Adrenal gland (tissue), 19 donors: ENCODE measurements at regions of chr1 and their contacts with region 1.

Region 1: GRCh38 chr1:201895913-201896807 is 7.5 kb downstream of the SHISA4 start:
- DNase-seq: peak; percentile 91 to 97 (median 93)
- H3K4me3 ChIP-seq: no peak overlapping the region
- H3K27ac ChIP-seq: peak overlapping the region in 3 of 5 donors; percentile 31 to 82 (median 46)
- H3K4me1 ChIP-seq: peaks cover 0 to 9% of the 10 kb centered on the region in 2 donors
- H3K27me3 ChIP-seq: no peaks in the 10 kb centered on the region
- CTCF ChIP-seq: peak; percentile 92 to 98 (median 97)
- POLR2A ChIP-seq: no peak

Region 2: DNA sequence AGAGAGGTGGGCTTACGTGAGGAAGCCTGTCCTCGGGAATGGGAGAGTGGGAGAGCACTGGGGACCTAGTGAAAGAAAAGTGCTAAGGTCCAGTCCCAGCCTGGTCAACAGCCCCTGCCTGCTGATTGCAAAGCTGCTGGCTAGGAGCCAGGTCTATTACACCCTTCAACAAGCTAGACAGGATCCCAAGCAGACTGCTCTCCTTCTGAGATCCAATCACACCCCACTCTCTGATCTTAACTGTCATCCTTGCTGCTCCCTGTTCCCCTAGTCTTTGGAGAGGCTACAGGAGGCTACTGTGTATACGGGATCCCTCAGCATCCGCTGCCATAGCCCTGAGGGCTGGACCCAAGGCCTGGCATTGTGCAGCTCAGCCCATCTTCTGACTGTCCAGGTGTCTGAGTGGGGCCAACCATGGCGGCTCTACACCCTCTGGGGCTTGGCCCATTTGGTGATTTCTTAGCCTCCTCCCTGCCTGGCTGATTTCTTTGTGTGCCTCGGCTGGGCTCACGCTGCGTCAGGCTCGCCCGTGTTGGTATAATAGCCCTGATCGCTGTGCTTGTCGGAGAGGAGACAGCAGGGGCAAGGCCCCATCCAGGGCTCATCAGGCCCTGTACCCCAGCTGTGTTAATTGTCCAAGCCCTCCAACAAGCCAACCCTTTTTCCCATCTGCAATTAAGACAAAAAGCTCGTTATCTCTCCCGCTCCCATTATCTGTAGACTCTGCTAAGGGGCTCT is 313.3 kb before region 1 on chr1:
- intact Hi-C with region 1: no loop called
- DNase-seq: peak in 1 of 7 donors; percentile 31
- H3K4me3 ChIP-seq: no peak overlapping the region
- H3K27ac ChIP-seq: no peak overlapping the region
- H3K4me1 ChIP-seq: peaks cover 0 to 4% of the 10 kb centered on the region in 2 donors
- H3K27me3 ChIP-seq: no peaks in the 10 kb centered on the region
- CTCF ChIP-seq: no peak
- POLR2A ChIP-seq: no peak

Region 3: GRCh38 chr1:201970334-201971159 is 74.4 kb after region 1 on chr1:
- intact Hi-C with region 1: loop called (anchors 2 kb)
- DNase-seq: peak in 2 of 7 donors; percentile 36 to 45
- H3K4me3 ChIP-seq: no peak overlapping the region
- H3K27ac ChIP-seq: no peak overlapping the region
- H3K4me1 ChIP-seq: peaks cover 11 to 14% of the 10 kb centered on the region in 2 donors
- H3K27me3 ChIP-seq: no peaks in the 10 kb centered on the region
- CTCF ChIP-seq: no peak
- POLR2A ChIP-seq: no peak

Region 4: GRCh38 chr1:202046227-202046801 is 150.2 kb after region 1 on chr1:
- intact Hi-C with region 1: no loop called
- DNase-seq: no peak
- H3K4me3 ChIP-seq: no peak overlapping the region
- H3K27ac ChIP-seq: no peak overlapping the region
- H3K4me1 ChIP-seq: no peaks in the 10 kb centered on the region
- H3K27me3 ChIP-seq: no peaks in the 10 kb centered on the region
- CTCF ChIP-seq: no peak
- POLR2A ChIP-seq: no peak

Region 5: DNA sequence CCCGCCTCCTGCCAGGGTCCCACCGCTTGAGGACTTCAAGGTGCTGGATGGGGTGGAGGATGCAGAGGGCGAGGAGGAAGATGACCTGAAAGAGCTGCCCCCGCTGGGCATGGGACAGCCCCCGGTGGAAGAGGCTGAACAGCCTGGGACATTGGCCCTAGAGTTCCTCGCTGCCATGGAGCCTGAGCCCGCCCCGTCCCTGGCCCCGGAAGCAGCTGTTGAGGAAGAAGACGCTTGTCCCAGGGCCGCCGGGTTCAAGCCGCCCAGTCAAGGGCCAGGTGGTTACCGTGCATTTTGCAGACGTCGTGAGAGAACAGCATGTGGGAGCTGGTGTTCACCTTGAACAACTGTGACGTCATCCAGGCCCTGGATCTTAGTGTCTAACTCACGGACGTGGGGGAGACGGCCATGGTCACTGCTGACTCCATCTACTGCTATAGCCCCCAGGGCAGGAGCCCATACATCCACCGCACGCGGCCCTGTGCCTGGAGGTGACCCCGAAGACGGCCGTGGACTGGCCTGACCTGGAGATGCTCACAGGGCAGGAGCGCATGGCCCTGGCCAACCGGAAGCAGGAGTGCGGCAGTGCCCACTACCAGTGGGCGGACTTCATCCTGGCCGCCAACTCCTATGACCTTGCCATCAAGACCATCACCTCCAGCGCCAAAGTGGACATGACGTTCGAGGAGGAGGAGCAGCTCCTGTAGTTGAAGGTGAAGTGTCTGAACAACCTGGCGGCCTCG is 542.4 kb after region 1 on chr1:
- intact Hi-C with region 1: no loop called
- DNase-seq: no peak
- H3K4me3 ChIP-seq: no peak overlapping the region
- H3K27ac ChIP-seq: no peak overlapping the region
- H3K4me1 ChIP-seq: no peaks in the 10 kb centered on the region
- H3K27me3 ChIP-seq: no peaks in the 10 kb centered on the region
- CTCF ChIP-seq: no peak
- POLR2A ChIP-seq: no peak